ENCODE measurements at regions of chr15 and their contacts with region 1.

Region 1: DNA sequence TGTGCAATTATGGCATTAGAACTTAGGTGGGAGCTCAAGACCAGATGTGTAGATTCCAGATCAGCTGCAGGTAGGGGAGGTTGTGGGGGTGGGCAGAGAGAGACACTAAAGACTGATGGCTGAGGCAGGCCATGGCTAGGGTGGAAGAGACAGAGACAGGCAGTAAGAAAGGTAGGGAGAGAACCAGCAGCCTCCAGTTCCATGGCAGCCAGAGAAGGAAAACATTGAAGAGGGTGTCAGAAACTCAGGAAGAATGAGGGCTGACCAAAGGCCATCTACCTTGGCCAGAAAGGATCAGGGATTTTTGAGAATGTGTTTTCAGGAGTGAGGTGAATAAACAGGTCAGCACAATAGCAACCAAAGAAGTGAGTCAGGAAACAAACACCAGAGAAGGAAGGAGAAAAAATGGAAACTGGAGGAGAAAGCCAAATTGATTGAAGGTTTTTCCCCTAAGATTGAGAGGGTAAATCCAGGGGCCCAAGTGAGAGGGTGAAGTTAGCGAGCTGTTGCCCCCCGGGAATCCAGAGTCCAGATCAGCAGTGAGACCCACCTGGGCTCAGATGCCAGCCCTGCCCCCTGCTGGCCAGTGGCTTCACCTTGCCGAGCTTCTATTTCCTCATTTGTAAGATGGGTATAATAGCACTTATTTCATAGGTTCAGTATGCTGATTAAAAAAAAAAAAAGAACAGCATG is 41.0 kb downstream of the ABHD2 start:
- DNase-seq: peak; percentile 59
- H3K4me3 ChIP-seq: no peak overlapping the region; a peak in 1 of 4 replicates
- H3K27ac ChIP-seq: no peak overlapping the region
- H3K4me1 ChIP-seq: peaks cover 0 to 4% of the 10 kb centered on the region in 2 experiments; a peak in 3 of 4 replicates
- H3K27me3 ChIP-seq: no peaks in the 10 kb centered on the region
- CTCF ChIP-seq: peak; percentile 87
- EP300 ChIP-seq: no peak
- RAD21 ChIP-seq: peak; percentile 72

Region 2: GRCh38 chr15:89087830-89088604 is 41.3 kb before region 1 on chr15 and contains the start of gene ABHD2:
- CTCF ChIA-PET with region 1: interaction called, 31 read pairs
- POLR2A ChIA-PET with region 1: no interaction called
- DNase-seq: peak; percentile 90
- H3K4me3 ChIP-seq: peak within 1 kb of the TSS; percentile 85 to 97
- H3K27ac ChIP-seq: peak within 1 kb of the TSS; percentile 97 to 98
- H3K4me1 ChIP-seq: peaks cover 31 to 70% of the 10 kb centered on the region in 2 experiments
- H3K27me3 ChIP-seq: no peaks in the 10 kb centered on the region
- CTCF ChIP-seq: no peak
- EP300 ChIP-seq: peak in 1 of 2 experiments; percentile 78; a peak in 3 of 4 replicates
- RAD21 ChIP-seq: no peak
- polyA plus RNA-seq, gene ABHD2: 19.2 and 25.7 TPM in 2 replicates

Region 3: GRCh38 chr15:89101302-89102191 is 27.7 kb before region 1 on chr15:
- CTCF ChIA-PET with region 1: interaction called, 22 read pairs
- POLR2A ChIA-PET with region 1: no interaction called
- DNase-seq: no peak
- H3K4me3 ChIP-seq: no peak overlapping the region
- H3K27ac ChIP-seq: peak overlapping the region; percentile 54 to 86
- H3K4me1 ChIP-seq: peaks cover 36 to 45% of the 10 kb centered on the region in 2 experiments
- H3K27me3 ChIP-seq: no peaks in the 10 kb centered on the region
- CTCF ChIP-seq: no peak
- EP300 ChIP-seq: peak; percentile 7 to 79; a peak in 2 of 4 replicates
- RAD21 ChIP-seq: no peak

Region 4: GRCh38 chr15:89112341-89112971 is 16.8 kb before region 1 on chr15:
- CTCF ChIA-PET with region 1: interaction called, 35 read pairs
- POLR2A ChIA-PET with region 1: no interaction called
- DNase-seq: no peak
- H3K4me3 ChIP-seq: no peak overlapping the region
- H3K27ac ChIP-seq: peak overlapping the region; percentile 51 to 68
- H3K4me1 ChIP-seq: peaks cover 14 to 54% of the 10 kb centered on the region in 2 experiments
- H3K27me3 ChIP-seq: no peaks in the 10 kb centered on the region
- CTCF ChIP-seq: no peak
- EP300 ChIP-seq: no peak; a peak in 1 of 4 replicates
- RAD21 ChIP-seq: no peak

Region 5: DNA sequence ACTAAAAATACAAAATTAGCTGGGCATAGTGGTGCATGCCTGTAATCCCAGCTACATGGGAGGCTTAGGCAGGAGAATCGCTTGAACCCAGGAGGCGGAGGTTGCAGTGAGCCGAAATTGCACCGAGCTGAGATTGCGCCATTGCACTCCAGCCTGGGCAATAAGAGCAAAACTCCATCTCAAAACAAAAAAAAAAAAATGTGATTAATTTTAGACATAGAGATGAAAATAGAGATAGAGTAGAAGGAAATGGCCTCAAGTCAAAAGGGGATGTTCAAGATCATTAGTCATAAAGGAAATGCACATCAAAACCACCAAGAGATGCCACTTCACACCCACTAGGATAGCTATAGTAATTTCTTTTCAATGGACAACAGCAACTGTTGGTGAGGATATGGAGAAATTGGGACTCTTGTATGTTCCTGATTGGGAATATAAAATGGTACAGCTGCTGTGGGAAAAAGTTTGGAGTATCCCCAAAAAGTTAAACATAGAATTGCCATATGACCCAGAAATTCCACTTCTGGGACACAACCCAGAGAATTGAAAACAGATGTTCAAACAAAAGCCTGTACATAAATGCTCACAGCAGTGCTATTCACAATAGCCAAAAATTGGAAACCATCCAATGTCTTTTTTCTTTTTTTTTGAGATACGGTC is 14.4 kb after region 1 on chr15:
- CTCF ChIA-PET with region 1: interaction called, 25 read pairs
- POLR2A ChIA-PET with region 1: no interaction called
- DNase-seq: peak; percentile 36
- H3K4me3 ChIP-seq: peak overlapping the region in 1 of 2 experiments; percentile 18; a peak in 1 of 4 replicates
- H3K27ac ChIP-seq: peak overlapping the region; percentile 77 to 96; a peak in 3 of 4 replicates
- H3K4me1 ChIP-seq: peaks cover 19 to 46% of the 10 kb centered on the region in 2 experiments
- H3K27me3 ChIP-seq: no peaks in the 10 kb centered on the region
- CTCF ChIP-seq: no peak
- EP300 ChIP-seq: peak; percentile 26 to 54
- RAD21 ChIP-seq: no peak

Region 6: GRCh38 chr15:89243691-89244471 is 114.6 kb after region 1 on chr15 and contains the start of gene FANCI:
- CTCF ChIA-PET with region 1: no interaction called
- POLR2A ChIA-PET with region 1: no interaction called
- DNase-seq: peak; percentile 96
- H3K4me3 ChIP-seq: peak within 1 kb of the TSS; percentile 68 to 89
- H3K27ac ChIP-seq: peak within 1 kb of the TSS; percentile 43 to 72; a peak in 3 of 4 replicates
- H3K4me1 ChIP-seq: peaks cover 4 to 10% of the 10 kb centered on the region in 2 experiments; a peak in 3 of 4 replicates
- H3K27me3 ChIP-seq: no peaks in the 10 kb centered on the region
- CTCF ChIP-seq: peak; percentile 57
- EP300 ChIP-seq: no peak; a peak in 1 of 4 replicates
- RAD21 ChIP-seq: peak; percentile 60
- polyA plus RNA-seq, gene FANCI: 13.2 and 15.4 TPM in 2 replicates

Measured in SK-N-SH (cell line).